ENCODE measurements at regions of chrX and their contacts with region 1.

Region 1: GRCh38 chrX:74550295-74550802 is 64.1 kb downstream of the RLIM start:
- DNase-seq: peak; percentile 79 to 88
- ATAC-seq: peak; percentile 97 to 99 (median 98)
- H3K4me3 ChIP-seq: no peak overlapping the region
- H3K4me3 Mint-ChIP-seq: peak overlapping the region; percentile 25
- H3K27ac ChIP-seq: no peak overlapping the region
- H3K27ac Mint-ChIP-seq: no peak overlapping the region
- H3K4me1 ChIP-seq: peaks cover 5% of the 10 kb centered on the region
- H3K4me1 Mint-ChIP-seq: no peaks in the 10 kb centered on the region
- H3K27me3 ChIP-seq: no peaks in the 10 kb centered on the region
- H3K27me3 Mint-ChIP-seq: peaks cover 0 to 5% of the 10 kb centered on the region in 2 donors
- CTCF ChIP-seq: peak; percentile 92

Region 2: GRCh38 chrX:73855546-73855945 is 694.8 kb before region 1 on chrX:
- intact Hi-C with region 1: loop called (anchors 5 kb)
- DNase-seq: peak; percentile 27 to 76
- ATAC-seq: peak in 2 of 3 donors; percentile 52
- H3K4me3 ChIP-seq: no peak overlapping the region
- H3K4me3 Mint-ChIP-seq: no peak overlapping the region
- H3K27ac ChIP-seq: no peak overlapping the region
- H3K27ac Mint-ChIP-seq: no peak overlapping the region
- H3K4me1 ChIP-seq: no peaks in the 10 kb centered on the region
- H3K4me1 Mint-ChIP-seq: peaks cover 0 to 6% of the 10 kb centered on the region in 2 donors
- H3K27me3 ChIP-seq: no peaks in the 10 kb centered on the region
- H3K27me3 Mint-ChIP-seq: peaks cover 0 to 6% of the 10 kb centered on the region in 2 donors
- CTCF ChIP-seq: peak; percentile 54

Region 3: GRCh38 chrX:74382613-74383012 is 167.7 kb before region 1 on chrX:
- intact Hi-C with region 1: loop called (anchors 1 kb)
- DNase-seq: peak; percentile 26 to 66
- ATAC-seq: peak; percentile 58 to 89 (median 68)
- H3K4me3 ChIP-seq: no peak overlapping the region
- H3K4me3 Mint-ChIP-seq: no peak overlapping the region
- H3K27ac ChIP-seq: no peak overlapping the region
- H3K27ac Mint-ChIP-seq: no peak overlapping the region
- H3K4me1 ChIP-seq: no peaks in the 10 kb centered on the region
- H3K4me1 Mint-ChIP-seq: no peaks in the 10 kb centered on the region
- H3K27me3 ChIP-seq: no peaks in the 10 kb centered on the region
- H3K27me3 Mint-ChIP-seq: peaks cover 5 to 31% of the 10 kb centered on the region in 2 donors
- CTCF ChIP-seq: peak; percentile 40

Region 4: GRCh38 chrX:74492720-74493201 is 57.6 kb before region 1 on chrX:
- intact Hi-C with region 1: loop called (anchors 1 kb)
- DNase-seq: peak; percentile 15 to 45
- ATAC-seq: peak in 1 of 3 donors; percentile 50
- H3K4me3 ChIP-seq: no peak overlapping the region
- H3K4me3 Mint-ChIP-seq: no peak overlapping the region
- H3K27ac ChIP-seq: no peak overlapping the region
- H3K27ac Mint-ChIP-seq: no peak overlapping the region
- H3K4me1 ChIP-seq: no peaks in the 10 kb centered on the region
- H3K4me1 Mint-ChIP-seq: no peaks in the 10 kb centered on the region
- H3K27me3 ChIP-seq: no peaks in the 10 kb centered on the region
- H3K27me3 Mint-ChIP-seq: no peaks in the 10 kb centered on the region
- CTCF ChIP-seq: no peak

Region 5: GRCh38 chrX:74535408-74536151 is 14.8 kb before region 1 on chrX:
- intact Hi-C with region 1: loop called (anchors 2 kb)
- DNase-seq: peak; percentile 29 to 51
- ATAC-seq: peak; percentile 55 to 67 (median 64)
- H3K4me3 ChIP-seq: peak overlapping the region; percentile 64
- H3K4me3 Mint-ChIP-seq: peak overlapping the region; percentile 83
- H3K27ac ChIP-seq: peak overlapping the region; percentile 49
- H3K27ac Mint-ChIP-seq: peak overlapping the region; percentile 59 to 83
- H3K4me1 ChIP-seq: peaks cover 25% of the 10 kb centered on the region
- H3K4me1 Mint-ChIP-seq: peaks cover 5 to 18% of the 10 kb centered on the region in 2 donors
- H3K27me3 ChIP-seq: no peaks in the 10 kb centered on the region
- H3K27me3 Mint-ChIP-seq: peaks cover 0 to 11% of the 10 kb centered on the region in 2 donors
- CTCF ChIP-seq: no peak

Region 6: GRCh38 chrX:74579597-74580198 is 29.3 kb after region 1 on chrX:
- intact Hi-C with region 1: no loop called
- DNase-seq: no peak
- ATAC-seq: no peak
- H3K4me3 ChIP-seq: no peak overlapping the region
- H3K4me3 Mint-ChIP-seq: no peak overlapping the region
- H3K27ac ChIP-seq: no peak overlapping the region
- H3K27ac Mint-ChIP-seq: no peak overlapping the region
- H3K4me1 ChIP-seq: no peaks in the 10 kb centered on the region
- H3K4me1 Mint-ChIP-seq: peaks cover 0 to under 1% of the 10 kb centered on the region in 2 donors
- H3K27me3 ChIP-seq: no peaks in the 10 kb centered on the region
- H3K27me3 Mint-ChIP-seq: no peaks in the 10 kb centered on the region
- CTCF ChIP-seq: no peak

Region 7: DNA sequence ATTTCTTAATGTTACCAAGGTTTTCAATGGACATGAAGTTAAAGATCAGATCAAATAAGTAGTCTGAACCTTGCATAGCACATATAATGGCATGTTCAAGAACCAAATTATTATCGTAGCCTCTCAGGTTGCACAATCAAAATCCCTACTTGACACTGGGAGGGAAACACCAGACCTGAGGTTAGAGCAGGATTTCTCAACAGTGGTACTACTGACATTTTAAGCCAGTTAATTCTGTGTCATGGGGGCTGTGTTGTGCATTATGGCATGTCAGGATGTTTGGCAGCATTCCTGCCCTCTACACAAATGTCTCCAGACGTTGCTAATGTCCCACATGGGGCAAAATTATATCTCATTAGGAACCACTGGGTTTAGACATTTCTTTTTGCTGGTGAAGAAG is 43.2 kb after region 1 on chrX:
- intact Hi-C with region 1: no loop called
- DNase-seq: no peak
- ATAC-seq: no peak
- H3K4me3 ChIP-seq: no peak overlapping the region
- H3K4me3 Mint-ChIP-seq: no peak overlapping the region
- H3K27ac ChIP-seq: no peak overlapping the region
- H3K27ac Mint-ChIP-seq: no peak overlapping the region
- H3K4me1 ChIP-seq: no peaks in the 10 kb centered on the region
- H3K4me1 Mint-ChIP-seq: peaks cover 0 to 10% of the 10 kb centered on the region in 2 donors
- H3K27me3 ChIP-seq: no peaks in the 10 kb centered on the region
- H3K27me3 Mint-ChIP-seq: no peaks in the 10 kb centered on the region
- CTCF ChIP-seq: no peak